ENCODE measurements at regions of chr5 and their contacts with region 1.

Region 1: DNA sequence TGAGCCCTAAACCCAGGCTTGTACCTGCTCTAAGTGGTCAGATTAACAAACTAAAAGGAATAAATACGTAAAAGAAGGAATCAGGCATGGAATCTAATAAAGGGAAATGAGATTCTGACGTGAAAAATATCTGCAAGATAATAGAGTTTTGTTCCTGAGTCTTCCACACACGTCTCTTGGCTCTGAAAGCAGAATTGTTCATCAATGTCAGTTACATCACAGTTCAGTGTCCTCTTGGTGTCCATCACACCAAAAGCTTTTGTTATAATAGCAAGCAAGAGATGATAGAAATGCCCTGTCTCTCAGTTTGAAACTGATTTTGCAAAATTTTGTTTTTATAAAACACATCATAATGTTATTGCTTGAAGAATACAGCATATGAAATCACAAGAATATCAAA is 34.7 kb upstream of the NMUR2 start:
- DNase-seq: no peak
- H3K4me3 ChIP-seq: no peak overlapping the region
- H3K27ac ChIP-seq: no peak overlapping the region
- H3K4me1 ChIP-seq: no peaks in the 10 kb centered on the region
- H3K27me3 ChIP-seq: no peaks in the 10 kb centered on the region
- CTCF ChIP-seq: no peak
- POLR2A ChIP-seq: no peak

Region 2: GRCh38 chr5:152456815-152457443 is 17.1 kb after region 1 on chr5:
- intact Hi-C with region 1: loop called (anchors 1 kb)
- DNase-seq: no peak
- H3K4me3 ChIP-seq: no peak overlapping the region
- H3K27ac ChIP-seq: no peak overlapping the region
- H3K4me1 ChIP-seq: no peaks in the 10 kb centered on the region
- H3K27me3 ChIP-seq: no peaks in the 10 kb centered on the region
- CTCF ChIP-seq: no peak
- POLR2A ChIP-seq: no peak

Measured in breast epithelium (tissue), 4 donors.